Activated T-helper 2 cell treated with anti-CD3 and anti-CD28 coated beads, Interferon-gamma antibody, Interleukin-2, Interleukin-4, amounts not matched to agents 10 μg/mL and 5 μg/mL and 100 μg/mL, durations not matched to agents 14 hours and 24 hours and 36 hours (primary cell): ENCODE measurements at regions of chr7 and their contacts with region 1.

Region 1: DNA sequence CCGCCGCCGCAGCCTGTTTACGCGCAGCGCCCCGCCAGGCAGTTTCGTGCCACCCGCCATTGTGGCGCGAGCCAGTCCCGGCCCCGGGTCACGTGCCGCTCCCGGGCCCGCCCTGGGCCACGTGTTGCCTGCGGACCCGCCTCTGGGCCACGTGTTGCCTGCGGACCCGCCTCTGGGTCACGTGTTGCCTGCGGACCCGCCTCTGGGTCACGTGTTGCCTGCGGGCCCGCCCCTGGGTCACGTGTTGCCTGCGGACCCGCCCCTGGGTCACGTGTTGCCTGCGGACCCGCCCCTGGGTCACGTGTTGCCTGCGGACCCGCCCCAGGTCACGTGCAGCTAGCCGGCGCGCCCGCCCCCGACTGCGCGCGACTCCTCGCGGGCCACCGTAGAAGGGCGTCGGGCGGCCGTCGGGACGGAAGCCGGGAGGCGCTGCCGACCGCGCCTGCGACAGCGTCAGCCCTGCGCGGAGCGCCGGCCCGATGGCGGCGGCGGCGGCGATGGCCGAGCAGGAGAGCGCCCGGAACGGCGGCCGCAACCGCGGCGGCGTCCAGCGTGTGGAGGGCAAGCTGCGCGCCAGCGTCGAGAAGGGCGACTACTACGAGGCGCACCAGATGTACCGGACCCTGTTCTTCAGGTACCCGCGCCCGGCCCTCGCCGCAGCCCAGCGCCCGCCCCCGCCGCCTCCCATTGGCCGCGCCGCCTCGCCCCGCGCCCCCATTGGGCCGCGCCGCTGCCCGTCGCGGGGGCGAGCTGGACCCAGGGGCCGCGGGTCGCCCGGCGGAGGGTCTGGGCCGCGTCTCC is at the start of gene GET4:
- DNase-seq: peak; percentile 96
- H3K4me3 Mint-ChIP-seq: peak within 1 kb of the TSS; percentile 90
- H3K27ac Mint-ChIP-seq: peak within 1 kb of the TSS; percentile 80
- H3K4me1 Mint-ChIP-seq: peaks cover 18% of the 10 kb centered on the region
- H3K27me3 Mint-ChIP-seq: no peaks in the 10 kb centered on the region
- total RNA-seq, gene GET4: 32.2 and 35.9 TPM in 2 replicates

Region 2: DNA sequence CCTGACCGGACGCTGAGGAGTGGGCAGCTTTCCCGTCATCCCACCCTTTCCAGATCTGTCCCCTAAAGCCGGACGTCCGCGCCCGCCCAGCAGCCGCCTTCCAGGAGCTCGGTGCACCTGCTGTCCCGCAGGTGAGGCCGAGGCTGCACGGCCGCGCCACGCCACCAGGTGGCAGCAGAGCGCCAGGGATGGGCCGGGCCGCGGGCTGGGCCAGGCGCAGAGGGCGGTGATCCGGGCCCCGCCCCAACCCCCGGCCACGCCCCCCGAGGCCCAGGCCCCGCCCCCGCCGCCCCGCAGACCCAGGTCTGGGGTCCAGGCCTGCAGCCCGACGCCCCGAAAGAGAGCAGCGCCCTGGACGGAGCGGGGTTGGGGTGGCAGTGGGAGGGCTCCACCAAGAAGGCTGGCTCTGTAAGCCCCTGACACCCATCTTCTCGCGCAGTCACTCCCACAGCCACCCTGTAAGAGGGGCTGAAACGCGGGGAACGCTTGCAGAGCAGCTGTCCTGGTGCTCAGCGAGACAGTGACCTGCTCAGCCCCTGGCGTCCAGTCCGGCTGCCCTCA is 554.2 kb before region 1 on chr7:
- intact Hi-C with region 1: loop called (anchors 2 kb)
- DNase-seq: peak; percentile 66
- H3K4me3 Mint-ChIP-seq: no peak overlapping the region
- H3K27ac Mint-ChIP-seq: no peak overlapping the region
- H3K4me1 Mint-ChIP-seq: no peaks in the 10 kb centered on the region
- H3K27me3 Mint-ChIP-seq: peaks cover 2% of the 10 kb centered on the region

Region 3: DNA sequence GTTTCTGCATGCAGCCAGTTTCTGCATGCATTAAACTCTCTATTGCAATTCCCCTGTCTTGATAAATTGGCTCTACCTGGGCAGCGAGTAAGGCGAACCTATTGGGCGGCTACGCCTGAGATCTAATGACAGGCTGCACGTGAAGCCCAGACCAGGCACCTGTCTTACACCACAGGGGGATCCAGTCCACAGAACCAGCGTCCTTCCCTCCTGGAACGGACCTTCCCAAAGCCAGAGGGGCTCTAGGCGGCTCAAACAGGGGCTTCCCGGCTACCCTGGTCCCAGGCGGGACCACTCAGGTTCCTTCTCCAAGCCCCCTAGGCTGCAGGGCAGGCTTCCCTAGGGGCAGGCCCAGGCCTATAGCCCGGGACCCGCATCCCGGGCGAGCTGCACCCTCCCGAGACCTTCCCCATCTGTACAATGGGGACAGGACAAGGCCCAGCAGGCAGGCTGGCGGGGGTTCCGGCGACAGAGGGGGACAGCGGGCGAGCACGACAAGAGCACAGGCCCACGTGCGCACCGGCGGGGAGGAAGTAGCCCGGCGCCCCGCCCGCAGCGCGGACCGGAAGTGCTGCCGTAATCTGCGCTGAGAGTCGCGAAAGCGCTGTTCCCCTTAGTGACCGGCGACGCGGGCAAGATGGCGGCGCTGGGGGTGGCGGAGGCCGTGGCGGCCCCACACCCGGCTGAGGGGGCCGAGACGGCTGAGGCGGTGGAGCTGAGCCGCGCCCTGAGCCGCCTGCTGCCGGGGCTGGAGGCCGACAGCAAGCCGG is 150.1 kb before region 1 on chr7 and contains the start of gene DNAAF5:
- intact Hi-C with region 1: no loop called
- DNase-seq: peak; percentile 85
- H3K4me3 Mint-ChIP-seq: peak within 1 kb of the TSS; percentile 92
- H3K27ac Mint-ChIP-seq: peak within 1 kb of the TSS; percentile 91
- H3K4me1 Mint-ChIP-seq: peaks cover 17% of the 10 kb centered on the region
- H3K27me3 Mint-ChIP-seq: no peaks in the 10 kb centered on the region
- total RNA-seq, gene DNAAF5: 41.5 and 41.7 TPM in 2 replicates

Region 4: GRCh38 chr7:786472-787255 is 89.7 kb before region 1 on chr7:
- intact Hi-C with region 1: loop called (anchors 1 kb)
- DNase-seq: peak; percentile 42
- H3K4me3 Mint-ChIP-seq: no peak overlapping the region
- H3K27ac Mint-ChIP-seq: no peak overlapping the region
- H3K4me1 Mint-ChIP-seq: no peaks in the 10 kb centered on the region
- H3K27me3 Mint-ChIP-seq: no peaks in the 10 kb centered on the region

Region 5: DNA sequence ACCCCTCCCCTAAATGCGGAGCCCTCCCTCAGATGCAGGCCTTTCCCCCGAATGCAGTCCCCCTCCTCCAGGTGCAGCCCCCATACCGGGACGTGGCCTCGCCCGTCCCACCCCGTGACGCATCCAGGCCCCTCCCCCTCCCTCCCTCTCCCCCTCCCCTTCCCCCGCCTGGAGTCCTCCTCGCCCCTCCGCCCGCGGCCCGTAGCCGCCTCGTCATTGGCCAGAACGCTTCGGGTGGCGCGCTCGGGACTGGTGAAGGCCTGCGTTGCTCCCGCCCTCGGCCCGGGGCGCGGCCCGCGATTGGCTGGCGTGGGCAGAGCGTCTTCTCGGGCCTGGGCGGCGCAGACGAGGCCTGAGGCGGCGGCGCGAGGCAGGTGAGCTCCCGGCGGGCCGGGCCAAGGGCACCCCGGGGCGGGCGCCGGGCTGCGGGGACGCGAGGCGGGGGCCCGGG is 60.0 kb before region 1 on chr7:
- intact Hi-C with region 1: loop called (anchors 5 kb)
- DNase-seq: peak; percentile 95
- H3K4me3 Mint-ChIP-seq: peak overlapping the region; percentile 69
- H3K27ac Mint-ChIP-seq: no peak overlapping the region
- H3K4me1 Mint-ChIP-seq: peaks cover 41% of the 10 kb centered on the region
- H3K27me3 Mint-ChIP-seq: peaks cover 23% of the 10 kb centered on the region

Region 6: GRCh38 chr7:831596-832166 is 44.7 kb before region 1 on chr7:
- intact Hi-C with region 1: loop called (anchors 5 kb)
- DNase-seq: no peak
- H3K4me3 Mint-ChIP-seq: peak overlapping the region; percentile 69
- H3K27ac Mint-ChIP-seq: peak overlapping the region; percentile 93
- H3K4me1 Mint-ChIP-seq: peaks cover 30% of the 10 kb centered on the region
- H3K27me3 Mint-ChIP-seq: no peaks in the 10 kb centered on the region

Region 7: GRCh38 chr7:1480670-1481069 is 604.3 kb after region 1 on chr7:
- intact Hi-C with region 1: no loop called
- DNase-seq: no peak
- H3K4me3 Mint-ChIP-seq: no peak overlapping the region
- H3K27ac Mint-ChIP-seq: no peak overlapping the region
- H3K4me1 Mint-ChIP-seq: no peaks in the 10 kb centered on the region
- H3K27me3 Mint-ChIP-seq: no peaks in the 10 kb centered on the region